B cell (primary cell): ENCODE measurements at regions of chr16 and their contacts with region 1.

Region 1: DNA sequence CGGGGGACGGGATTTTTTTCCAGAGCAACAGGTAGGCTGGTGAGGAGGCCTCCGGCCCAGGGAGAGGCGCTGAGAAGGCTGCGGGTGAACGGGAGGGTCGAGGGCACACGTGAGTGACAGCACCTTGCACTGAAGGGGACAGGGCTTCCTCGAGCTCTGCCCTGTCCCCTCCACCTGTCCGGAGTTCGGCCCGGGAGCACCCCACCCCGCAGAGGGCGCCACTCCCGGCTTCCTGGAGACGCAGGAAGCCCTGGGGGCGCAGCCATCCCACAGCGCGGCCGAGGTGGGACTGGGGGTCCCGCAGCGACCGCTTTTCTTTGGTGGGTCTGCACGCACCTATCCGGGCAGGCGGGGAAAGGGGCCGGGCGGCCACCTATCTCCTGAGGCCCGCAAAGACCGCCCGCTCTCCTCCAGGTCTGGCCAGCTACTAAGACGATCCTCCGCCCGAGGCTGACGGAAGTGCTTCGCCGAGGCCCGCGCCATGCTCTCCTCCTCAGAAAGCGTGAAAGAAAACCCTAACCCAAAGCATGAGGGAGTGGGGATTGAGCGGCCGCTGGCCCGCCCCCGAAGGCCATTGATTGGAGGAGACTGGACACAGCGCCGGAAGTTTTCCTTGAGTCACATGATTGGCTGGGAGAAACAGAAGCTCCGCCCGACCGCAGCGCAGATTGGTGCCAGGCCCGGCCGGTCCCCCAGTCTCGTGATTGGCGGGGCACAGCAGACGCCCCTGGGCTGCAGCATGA is 34.3 kb downstream of the DDX19A start:
- DNase-seq: peak; percentile 96
- ATAC-seq: peak; percentile 93
- H3K4me3 ChIP-seq: peak overlapping the region; percentile 58 to 89 (median 74)
- H3K4me3 Mint-ChIP-seq: peak overlapping the region; percentile 97
- H3K27ac ChIP-seq: peak overlapping the region; percentile 64 to 81
- H3K27ac Mint-ChIP-seq: peak overlapping the region; percentile 95
- H3K4me1 ChIP-seq: peaks cover 18 to 25% of the 10 kb centered on the region in 2 donors
- H3K4me1 Mint-ChIP-seq: peaks cover 8% of the 10 kb centered on the region
- H3K27me3 ChIP-seq: no peaks in the 10 kb centered on the region
- H3K27me3 Mint-ChIP-seq: no peaks in the 10 kb centered on the region
- CTCF ChIP-seq: no peak

Region 2: DNA sequence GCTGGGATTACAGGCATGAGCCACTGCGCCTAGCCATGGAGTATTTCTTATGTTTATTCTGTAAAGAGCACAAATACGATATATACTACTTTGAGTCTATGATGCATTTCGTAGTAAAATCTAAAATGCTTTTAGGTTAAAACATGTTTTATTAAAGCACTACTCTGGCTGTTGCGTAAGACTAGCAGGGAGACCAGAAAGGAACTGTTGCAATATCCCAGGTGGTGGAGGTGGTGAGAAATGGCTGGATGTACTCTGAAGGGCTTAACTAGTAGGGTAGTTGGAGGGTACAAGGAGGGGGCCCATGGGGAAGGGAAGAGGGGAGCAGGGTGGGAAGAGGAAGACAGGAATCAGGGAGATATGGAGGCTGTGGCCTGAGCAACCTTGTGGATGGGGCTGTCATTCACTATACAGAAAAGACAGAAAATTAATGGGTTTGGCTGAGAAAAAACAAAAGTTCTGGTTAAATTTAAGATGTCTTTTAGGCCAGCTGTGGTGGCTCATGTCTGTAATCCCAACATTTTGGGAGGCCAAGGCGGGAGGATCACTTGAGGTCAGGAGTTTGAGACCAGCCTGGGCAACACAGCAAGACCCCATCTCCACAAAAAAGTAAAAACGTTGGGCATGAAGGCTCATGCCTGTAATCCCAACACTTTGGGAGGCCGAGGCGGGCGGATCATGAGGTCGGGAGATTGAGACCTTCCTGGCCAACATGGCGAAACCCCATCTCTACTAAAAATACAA is 22.1 kb after region 1 on chr16:
- CTCF ChIA-PET with region 1: interaction called, 5 read pairs
- POLR2A ChIA-PET with region 1: interaction called, 5 read pairs
- intact Hi-C with region 1: loop called (anchors 1 kb)
- DNase-seq: no peak
- ATAC-seq: no peak
- H3K4me3 ChIP-seq: no peak overlapping the region
- H3K4me3 Mint-ChIP-seq: peak overlapping the region; percentile 20
- H3K27ac ChIP-seq: no peak overlapping the region
- H3K27ac Mint-ChIP-seq: peak overlapping the region; percentile 8
- H3K4me1 ChIP-seq: peaks cover 39 to 52% of the 10 kb centered on the region in 2 donors
- H3K4me1 Mint-ChIP-seq: peaks cover 45% of the 10 kb centered on the region
- H3K27me3 ChIP-seq: peaks cover 0 to 2% (median 0%) of the 10 kb centered on the region in 4 experiments
- H3K27me3 Mint-ChIP-seq: no peaks in the 10 kb centered on the region
- CTCF ChIP-seq: no peak